Activated CD4-positive, alpha-beta T cell treated with anti-CD3 and anti-CD28 coated beads for 36 hours (primary cell): ENCODE measurements at regions of chr1 and their contacts with region 1.

Region 1: DNA sequence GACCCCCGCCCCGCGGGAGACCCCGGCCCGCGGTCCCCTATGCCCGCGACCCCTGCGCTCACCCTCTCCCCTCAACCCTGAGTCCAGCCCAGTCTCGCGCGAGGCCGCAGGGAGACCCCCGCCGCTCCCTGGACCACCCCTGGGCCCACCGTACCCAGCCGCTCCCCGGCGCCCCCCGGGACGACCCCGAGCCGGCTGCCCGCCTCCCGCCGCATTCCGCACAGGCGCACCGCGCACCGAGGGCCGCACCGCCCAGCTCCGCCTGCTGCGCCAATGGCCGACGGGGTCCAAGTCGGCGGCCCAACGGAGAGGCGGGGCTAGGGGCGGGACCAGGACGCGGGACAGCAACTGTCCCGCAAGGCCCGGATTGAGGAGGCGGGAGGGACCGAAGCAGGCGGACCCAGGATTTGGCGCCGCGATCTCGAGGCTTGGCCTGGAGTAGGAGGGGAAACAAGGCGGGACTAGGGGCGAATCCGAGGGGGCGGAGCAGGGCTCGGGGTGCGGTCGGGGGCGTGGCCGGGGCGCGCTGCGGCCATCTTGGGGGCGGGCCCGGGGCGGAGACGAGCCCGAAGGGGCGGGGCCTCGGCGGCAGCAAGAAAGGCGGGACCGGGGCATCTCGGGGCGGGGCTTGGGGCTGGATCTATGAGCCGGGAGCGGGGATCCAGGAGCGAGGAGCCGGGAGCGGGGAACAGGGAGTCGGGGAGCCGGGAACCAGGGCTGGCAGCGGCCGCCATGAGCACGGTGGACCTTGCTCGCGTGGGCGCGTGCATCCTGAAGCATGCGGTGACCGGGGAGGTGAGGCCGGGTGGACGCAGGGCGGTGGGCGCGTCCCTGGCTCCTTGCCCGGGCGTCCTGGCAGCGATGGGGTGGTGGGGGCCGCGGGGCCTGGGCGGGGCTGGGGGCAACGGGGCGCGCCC is at the start of gene PRXL2B:
- DNase-seq: peak; percentile 98
- ATAC-seq: peak; percentile 72
- H3K4me3 Mint-ChIP-seq: peak within 1 kb of the TSS; percentile 82
- H3K27ac Mint-ChIP-seq: peak within 1 kb of the TSS; percentile 94
- H3K4me1 Mint-ChIP-seq: peaks cover 42% of the 10 kb centered on the region
- H3K27me3 Mint-ChIP-seq: no peaks in the 10 kb centered on the region
- total RNA-seq, gene PRXL2B: 23.7 to 36.8 TPM

Region 2: DNA sequence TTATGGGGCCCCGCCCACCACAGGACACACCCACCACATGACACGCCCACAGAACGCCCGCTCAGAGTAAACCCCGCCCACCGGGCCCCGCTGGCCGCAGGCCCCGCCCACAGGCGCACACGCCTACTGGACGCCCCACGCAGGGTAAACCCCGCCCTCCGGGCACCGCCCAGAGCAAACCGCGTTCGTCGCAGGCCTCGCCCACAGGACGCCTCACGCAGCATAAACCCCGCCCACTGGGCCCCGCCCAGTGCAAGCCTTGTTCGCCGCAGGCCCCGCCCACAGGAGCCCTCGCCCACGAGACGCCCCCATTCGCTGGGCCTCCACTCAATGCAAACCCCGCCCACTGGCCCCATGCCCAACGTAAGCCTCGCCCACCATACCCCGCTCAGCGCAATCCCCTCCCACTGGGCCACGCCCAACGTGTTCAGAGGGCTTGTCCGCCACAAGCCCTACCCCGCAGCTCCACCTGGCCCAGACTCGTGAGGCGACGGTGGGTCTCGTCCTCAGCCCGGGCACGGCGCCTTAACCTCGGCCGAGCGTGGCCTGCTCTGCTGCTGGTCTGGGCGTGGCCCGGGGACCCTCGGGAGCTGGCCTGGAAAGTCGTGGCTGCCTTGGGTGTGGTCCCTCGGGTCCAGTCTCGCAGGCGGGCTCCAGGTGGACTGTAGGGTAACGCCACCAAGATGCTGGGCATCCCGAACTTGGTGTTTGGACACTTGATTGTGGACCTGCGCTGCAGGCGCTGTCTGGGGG is 666.9 kb before region 1 on chr1:
- CTCF ChIA-PET with region 1: no interaction called
- POLR2A ChIA-PET with region 1: no interaction called
- intact Hi-C with region 1: loop called in 1 of 2 experiments (anchors 1 kb)
- DNase-seq: peak; percentile 100
- ATAC-seq: peak; percentile 92
- H3K4me3 Mint-ChIP-seq: peak overlapping the region; percentile 62
- H3K27ac Mint-ChIP-seq: no peak overlapping the region
- H3K4me1 Mint-ChIP-seq: peaks cover 4% of the 10 kb centered on the region
- H3K27me3 Mint-ChIP-seq: no peaks in the 10 kb centered on the region

Region 3: DNA sequence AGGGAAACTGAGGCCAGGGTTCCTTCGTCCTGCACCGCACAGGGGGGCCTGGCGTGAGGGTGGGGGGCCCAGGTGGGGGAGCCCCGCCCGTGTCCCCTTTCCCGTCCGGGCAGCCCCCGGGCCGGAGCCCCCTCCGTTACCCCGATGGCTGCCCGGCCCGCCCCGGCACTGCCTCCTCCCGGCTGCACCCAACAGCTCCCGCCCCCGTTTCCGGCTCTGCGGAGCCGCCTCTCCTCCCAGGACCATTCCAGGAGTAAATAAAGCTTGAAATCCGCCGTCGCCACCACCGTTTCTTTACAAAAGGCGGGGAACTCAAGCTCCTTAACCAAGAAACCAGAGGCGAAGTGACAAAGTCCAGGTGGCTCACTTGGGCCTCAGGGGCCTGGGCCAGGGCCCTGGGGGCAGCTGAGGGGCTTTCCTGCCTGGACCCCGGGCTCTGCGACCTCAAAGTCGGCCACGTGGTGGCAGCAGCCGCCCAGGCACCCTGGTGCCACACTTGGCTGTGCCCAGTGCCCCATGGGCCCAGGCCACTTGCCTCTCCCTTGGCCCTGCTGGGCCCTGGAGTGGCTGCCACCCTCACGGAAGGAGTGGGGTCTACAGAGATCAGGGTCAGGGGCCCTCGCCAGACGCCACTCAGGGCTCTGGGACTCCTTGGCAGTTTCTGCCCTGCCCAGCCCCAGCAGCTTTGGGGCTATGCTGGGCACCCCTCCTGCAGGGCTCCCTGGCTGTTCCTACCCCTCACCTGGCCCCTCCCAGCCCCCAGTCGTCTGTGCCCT is 391.3 kb before region 1 on chr1:
- CTCF ChIA-PET with region 1: interaction called, 3 read pairs
- POLR2A ChIA-PET with region 1: no interaction called
- intact Hi-C with region 1: loop called in 1 of 2 experiments (anchors 1 kb)
- DNase-seq: peak; percentile 93
- ATAC-seq: peak; percentile 67
- H3K4me3 Mint-ChIP-seq: peak overlapping the region; percentile 77
- H3K27ac Mint-ChIP-seq: peak overlapping the region; percentile 86
- H3K4me1 Mint-ChIP-seq: peaks cover 32% of the 10 kb centered on the region
- H3K27me3 Mint-ChIP-seq: no peaks in the 10 kb centered on the region

Region 4: DNA sequence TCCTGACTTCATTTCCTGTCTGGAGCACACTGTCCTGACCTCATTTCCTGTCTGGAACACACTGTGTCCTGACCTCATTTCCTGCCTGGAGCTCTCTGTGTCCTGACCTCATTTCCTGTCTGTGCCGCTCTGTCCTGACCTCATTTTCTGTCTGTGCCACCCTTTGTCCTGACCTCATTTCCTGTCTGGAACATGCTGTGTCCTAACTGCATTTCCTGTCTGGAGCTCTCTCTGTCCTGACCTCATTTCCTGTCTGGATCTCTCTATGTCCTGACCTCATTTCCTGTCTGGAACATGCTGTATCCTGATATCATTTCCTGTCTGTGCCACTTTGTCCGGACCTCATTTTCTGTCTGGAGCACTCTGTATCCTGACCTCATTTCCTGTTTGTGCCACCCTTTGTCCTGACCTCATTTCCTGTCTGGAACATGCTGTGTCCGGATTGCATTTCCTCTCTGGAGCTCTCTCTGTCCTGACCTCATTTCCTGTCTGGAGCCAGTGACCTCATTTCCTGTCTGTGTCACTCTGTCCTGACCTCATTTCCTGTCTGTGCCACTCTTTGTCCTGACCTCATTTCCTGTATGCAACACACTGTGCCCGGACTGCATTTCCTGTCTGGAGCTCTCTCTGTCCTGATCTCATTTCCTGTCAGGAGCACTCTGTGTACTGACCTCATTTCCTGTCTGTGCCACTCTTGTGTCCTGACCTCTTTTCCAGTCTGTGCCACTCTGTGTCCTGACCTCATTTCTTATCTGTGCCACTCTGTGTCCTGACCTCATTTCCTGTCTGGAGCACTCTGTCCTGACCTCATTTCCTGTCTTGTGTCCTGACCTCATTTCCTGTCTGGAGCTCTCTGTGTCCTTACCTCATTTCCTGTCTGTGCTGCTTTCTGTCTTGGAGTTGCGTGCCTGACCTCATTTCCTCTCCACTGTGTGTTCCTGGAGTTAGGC is 330.7 kb before region 1 on chr1:
- CTCF ChIA-PET with region 1: no interaction called
- POLR2A ChIA-PET with region 1: no interaction called
- intact Hi-C with region 1: loop called in 1 of 2 experiments (anchors 10 kb)
- DNase-seq: peak; percentile 87
- ATAC-seq: peak; percentile 71
- H3K4me3 Mint-ChIP-seq: no peak overlapping the region
- H3K27ac Mint-ChIP-seq: no peak overlapping the region
- H3K4me1 Mint-ChIP-seq: peaks cover 54% of the 10 kb centered on the region
- H3K27me3 Mint-ChIP-seq: no peaks in the 10 kb centered on the region

Region 5: DNA sequence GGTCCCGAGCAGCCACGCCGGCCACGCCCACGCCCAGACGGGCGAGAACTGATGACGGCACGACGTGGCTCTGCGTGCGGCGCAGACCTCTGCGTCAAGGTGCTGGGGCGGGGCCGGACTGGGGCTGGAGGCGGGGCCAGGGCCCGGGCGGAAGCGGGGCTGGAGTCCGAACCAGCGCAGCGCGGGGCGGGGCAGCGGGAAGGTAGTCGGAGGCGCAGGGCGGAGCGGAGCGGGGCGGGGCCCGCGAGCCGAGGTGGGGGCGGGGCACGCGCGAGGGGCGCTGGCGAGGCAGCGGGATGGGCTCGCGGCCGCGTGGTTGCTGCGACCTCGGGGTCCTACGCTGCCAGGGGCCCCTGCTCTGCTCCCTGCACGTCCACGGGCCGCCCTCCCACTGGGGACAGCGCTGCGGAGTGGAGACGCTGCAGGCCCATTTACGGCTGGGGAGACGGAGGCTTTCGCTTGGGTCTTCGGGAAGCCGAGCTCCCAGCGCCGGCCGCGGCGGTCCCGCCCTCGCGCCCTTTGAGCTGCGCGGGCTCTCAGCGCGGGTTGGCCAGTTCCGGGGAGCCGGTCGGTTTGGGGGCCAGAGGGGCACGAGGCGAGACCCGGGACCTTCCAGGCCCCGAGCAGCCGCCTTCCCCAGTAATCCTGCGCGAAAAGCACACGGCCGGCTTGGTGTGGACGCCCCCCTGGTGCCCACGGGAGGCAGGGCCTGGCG is 173.7 kb before region 1 on chr1 and contains the start of gene PEX10:
- CTCF ChIA-PET with region 1: interaction called, 3 read pairs
- POLR2A ChIA-PET with region 1: interaction called, 4 read pairs
- intact Hi-C with region 1: loop called (anchors 1 to 2 kb)
- DNase-seq: peak; percentile 100
- ATAC-seq: peak; percentile 89
- H3K4me3 Mint-ChIP-seq: peak within 1 kb of the TSS; percentile 83
- H3K27ac Mint-ChIP-seq: peak within 1 kb of the TSS; percentile 85
- H3K4me1 Mint-ChIP-seq: peaks cover 38% of the 10 kb centered on the region
- H3K27me3 Mint-ChIP-seq: no peaks in the 10 kb centered on the region
- total RNA-seq, gene PEX10: 15.1 to 17.7 TPM

Region 6: GRCh38 chr1:2539312-2539907 is 47.0 kb before region 1 on chr1:
- CTCF ChIA-PET with region 1: no interaction called
- POLR2A ChIA-PET with region 1: no interaction called
- intact Hi-C with region 1: no loop called
- DNase-seq: peak; percentile 72
- ATAC-seq: peak; percentile 72
- H3K4me3 Mint-ChIP-seq: no peak overlapping the region
- H3K27ac Mint-ChIP-seq: no peak overlapping the region
- H3K4me1 Mint-ChIP-seq: peaks cover 4% of the 10 kb centered on the region
- H3K27me3 Mint-ChIP-seq: peaks cover 3% of the 10 kb centered on the region

Region 7: GRCh38 chr1:2556277-2556677 is 30.1 kb before region 1 on chr1 and contains the start of gene TNFRSF14:
- CTCF ChIA-PET with region 1: interaction called, 25 read pairs
- POLR2A ChIA-PET with region 1: interaction called, 23 read pairs
- intact Hi-C with region 1: loop called in 1 of 2 experiments (anchors 1 kb)
- DNase-seq: peak; percentile 85
- ATAC-seq: peak; percentile 61
- H3K4me3 Mint-ChIP-seq: peak within 1 kb of the TSS; percentile 98
- H3K27ac Mint-ChIP-seq: peak within 1 kb of the TSS; percentile 98
- H3K4me1 Mint-ChIP-seq: peaks cover 36% of the 10 kb centered on the region
- H3K27me3 Mint-ChIP-seq: no peaks in the 10 kb centered on the region
- total RNA-seq, gene TNFRSF14: 135 to 145 TPM

Region 8: DNA sequence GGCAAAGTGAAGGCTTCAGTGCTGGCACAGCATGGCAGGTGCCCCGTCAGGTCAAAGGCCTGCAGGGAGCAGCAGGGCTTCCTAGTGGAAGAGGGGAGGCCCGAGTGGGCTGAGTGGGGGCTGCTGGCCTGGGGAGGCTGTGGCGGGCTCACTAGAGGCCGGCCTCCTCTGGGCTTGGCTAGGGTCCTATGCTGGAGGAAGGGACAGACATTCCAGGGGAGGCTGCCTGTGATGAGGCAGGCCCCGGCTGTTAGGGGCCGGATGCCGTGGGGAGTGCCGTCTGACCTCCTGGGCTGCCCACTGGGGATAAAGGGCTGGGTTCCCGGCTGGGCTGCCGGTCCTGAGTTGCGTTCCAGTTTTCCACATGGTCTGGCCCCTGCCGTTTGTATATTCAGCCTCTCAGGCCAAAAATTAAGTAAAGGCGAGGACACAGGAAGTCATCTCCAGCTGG is 21.3 kb after region 1 on chr1:
- CTCF ChIA-PET with region 1: no interaction called
- POLR2A ChIA-PET with region 1: no interaction called
- intact Hi-C with region 1: no loop called
- DNase-seq: no peak
- ATAC-seq: no peak
- H3K4me3 Mint-ChIP-seq: no peak overlapping the region
- H3K27ac Mint-ChIP-seq: no peak overlapping the region
- H3K4me1 Mint-ChIP-seq: no peaks in the 10 kb centered on the region
- H3K27me3 Mint-ChIP-seq: no peaks in the 10 kb centered on the region

Region 9: GRCh38 chr1:3772027-3772714 is 1185.8 kb after region 1 on chr1:
- CTCF ChIA-PET with region 1: no interaction called
- POLR2A ChIA-PET with region 1: no interaction called
- intact Hi-C with region 1: loop called in 1 of 2 experiments (anchors 5 kb)
- DNase-seq: peak; percentile 94
- ATAC-seq: peak; percentile 81
- H3K4me3 Mint-ChIP-seq: peak overlapping the region; percentile 70
- H3K27ac Mint-ChIP-seq: peak overlapping the region; percentile 78
- H3K4me1 Mint-ChIP-seq: peaks cover 10% of the 10 kb centered on the region
- H3K27me3 Mint-ChIP-seq: no peaks in the 10 kb centered on the region